Natural killer cell (primary cell): ENCODE measurements at regions of chr18 and their contacts with region 1.

Region 1: DNA sequence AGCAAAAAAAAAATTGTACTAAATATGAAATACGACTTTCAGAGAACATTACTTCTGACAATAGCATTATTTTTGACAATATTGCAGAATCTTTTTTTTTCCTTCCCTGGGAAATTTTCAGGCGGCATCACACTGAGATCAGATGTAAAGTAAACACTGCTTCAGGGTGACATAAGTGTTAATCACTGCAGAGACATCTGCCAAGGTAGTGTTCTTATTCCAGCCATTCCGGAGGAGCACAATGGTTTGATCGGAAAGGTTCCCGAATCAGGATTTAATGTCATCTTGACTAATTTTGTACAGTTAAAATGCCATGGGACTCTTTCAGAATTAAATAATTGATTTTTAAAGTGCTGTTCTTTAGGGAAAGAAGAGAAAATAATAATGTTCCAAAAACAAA is 56.7 kb upstream of the ZNF236 start:
- DNase-seq: no peak
- ATAC-seq: no peak
- H3K4me3 ChIP-seq: no peak overlapping the region
- H3K4me3 Mint-ChIP-seq: no peak overlapping the region
- H3K27ac ChIP-seq: no peak overlapping the region
- H3K27ac Mint-ChIP-seq: no peak overlapping the region
- H3K4me1 ChIP-seq: peaks cover 18% of the 10 kb centered on the region
- H3K4me1 Mint-ChIP-seq: peaks cover 51 to 60% of the 10 kb centered on the region in 2 donors
- H3K27me3 ChIP-seq: no peaks in the 10 kb centered on the region
- H3K27me3 Mint-ChIP-seq: peaks cover 0 to 14% of the 10 kb centered on the region in 2 donors
- CTCF ChIP-seq: no peak

Region 2: GRCh38 chr18:76546088-76546435 is 219.6 kb before region 1 on chr18:
- intact Hi-C with region 1: no loop called
- DNase-seq: no peak
- ATAC-seq: no peak
- H3K4me3 ChIP-seq: no peak overlapping the region
- H3K4me3 Mint-ChIP-seq: no peak overlapping the region
- H3K27ac ChIP-seq: no peak overlapping the region
- H3K27ac Mint-ChIP-seq: no peak overlapping the region
- H3K4me1 ChIP-seq: no peaks in the 10 kb centered on the region
- H3K4me1 Mint-ChIP-seq: no peaks in the 10 kb centered on the region
- H3K27me3 ChIP-seq: no peaks in the 10 kb centered on the region
- H3K27me3 Mint-ChIP-seq: peaks cover 8 to 38% of the 10 kb centered on the region in 2 donors
- CTCF ChIP-seq: no peak

Region 3: GRCh38 chr18:76736309-76736708 is 29.3 kb before region 1 on chr18:
- intact Hi-C with region 1: no loop called
- DNase-seq: no peak
- ATAC-seq: no peak
- H3K4me3 ChIP-seq: no peak overlapping the region
- H3K4me3 Mint-ChIP-seq: no peak overlapping the region
- H3K27ac ChIP-seq: no peak overlapping the region
- H3K27ac Mint-ChIP-seq: no peak overlapping the region
- H3K4me1 ChIP-seq: peaks cover 7% of the 10 kb centered on the region
- H3K4me1 Mint-ChIP-seq: peaks cover 6% of the 10 kb centered on the region in 2 donors
- H3K27me3 ChIP-seq: no peaks in the 10 kb centered on the region
- H3K27me3 Mint-ChIP-seq: peaks cover 6 to 9% of the 10 kb centered on the region in 2 donors
- CTCF ChIP-seq: no peak

Region 4: GRCh38 chr18:76750917-76751890 is 14.4 kb before region 1 on chr18:
- intact Hi-C with region 1: loop called (anchors 1 kb)
- DNase-seq: no peak
- ATAC-seq: no peak
- H3K4me3 ChIP-seq: no peak overlapping the region
- H3K4me3 Mint-ChIP-seq: no peak overlapping the region
- H3K27ac ChIP-seq: no peak overlapping the region
- H3K27ac Mint-ChIP-seq: no peak overlapping the region
- H3K4me1 ChIP-seq: no peaks in the 10 kb centered on the region
- H3K4me1 Mint-ChIP-seq: no peaks in the 10 kb centered on the region
- H3K27me3 ChIP-seq: no peaks in the 10 kb centered on the region
- H3K27me3 Mint-ChIP-seq: peaks cover under 1 to 6% of the 10 kb centered on the region in 2 donors
- CTCF ChIP-seq: no peak

Region 5: DNA sequence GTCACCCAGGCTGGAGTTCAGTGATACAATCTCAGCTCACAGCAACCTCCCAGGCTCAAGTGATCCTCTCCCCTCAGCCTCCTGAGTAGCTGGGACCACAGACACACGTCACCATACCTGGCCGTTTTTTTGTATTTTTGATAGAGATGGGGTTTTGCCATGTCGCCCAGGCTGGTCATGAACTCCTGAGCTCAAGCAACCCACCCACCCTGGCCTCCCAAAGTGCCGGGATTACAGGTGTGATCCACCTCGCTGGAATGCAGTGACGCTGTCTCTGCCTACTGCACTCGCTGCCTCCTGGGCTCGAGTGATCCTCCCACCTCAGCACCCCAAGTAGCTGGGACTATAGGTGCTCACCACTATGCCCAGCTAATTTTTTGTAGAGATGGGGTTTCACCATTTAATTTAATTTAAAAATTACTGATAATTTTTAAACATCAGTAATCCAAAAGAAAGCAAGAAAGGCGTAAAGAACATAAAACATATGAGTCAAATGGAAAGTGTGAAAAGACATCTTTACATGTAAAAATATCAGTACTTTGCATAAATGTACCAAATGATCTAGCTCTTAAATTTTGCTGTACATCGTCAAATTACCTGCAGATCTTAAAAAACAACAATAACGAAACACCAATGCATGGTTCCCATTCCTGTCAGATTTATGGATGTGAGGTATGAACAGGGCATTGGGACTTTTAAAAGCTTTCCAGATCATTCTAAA is 53.9 kb after region 1 on chr18:
- intact Hi-C with region 1: no loop called
- DNase-seq: no peak
- ATAC-seq: no peak
- H3K4me3 ChIP-seq: no peak overlapping the region
- H3K4me3 Mint-ChIP-seq: peak overlapping the region; percentile 84
- H3K27ac ChIP-seq: no peak overlapping the region
- H3K27ac Mint-ChIP-seq: peak overlapping the region; percentile 87 to 89
- H3K4me1 ChIP-seq: peaks cover 30% of the 10 kb centered on the region
- H3K4me1 Mint-ChIP-seq: peaks cover 37 to 56% of the 10 kb centered on the region in 2 donors
- H3K27me3 ChIP-seq: no peaks in the 10 kb centered on the region
- H3K27me3 Mint-ChIP-seq: no peaks in the 10 kb centered on the region
- CTCF ChIP-seq: no peak